PC-9 (cell line): ENCODE measurements at regions of chr2 and their contacts with region 1.

Region 1: GRCh38 chr2:26922405-26923188 is 47.8 kb upstream of the MAPRE3 start:
- DNase-seq: peak in 1 of 2 experiments; percentile 25
- H3K4me3 ChIP-seq: no peak overlapping the region
- H3K27ac ChIP-seq: no peak overlapping the region
- H3K4me1 ChIP-seq: no peaks in the 10 kb centered on the region
- H3K27me3 ChIP-seq: peaks cover 16% of the 10 kb centered on the region
- CTCF ChIP-seq: peak; percentile 64

Region 2: DNA sequence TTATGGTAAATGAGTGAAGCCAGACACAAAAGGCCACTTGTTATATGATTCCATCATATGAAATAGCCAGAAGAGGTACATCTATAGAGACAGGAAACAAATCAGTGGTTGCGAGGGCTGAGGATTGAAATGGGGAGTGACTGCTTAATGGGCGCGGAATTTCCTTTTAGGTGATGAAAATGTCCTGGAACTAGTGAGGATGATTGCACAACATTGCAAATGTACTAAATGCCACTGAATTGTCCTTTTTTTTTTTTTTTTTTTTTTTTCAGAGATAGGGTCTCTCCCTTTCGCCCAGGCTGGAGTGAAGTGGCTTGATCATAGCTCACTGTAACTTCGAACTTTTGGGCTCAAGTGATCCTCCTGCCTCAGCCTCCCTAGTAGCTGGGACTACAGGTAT is 765.0 kb before region 1 on chr2:
- CTCF ChIA-PET with region 1: no interaction called
- POLR2A ChIA-PET with region 1: no interaction called
- intact Hi-C with region 1: no loop called
- DNase-seq: no peak
- H3K4me3 ChIP-seq: no peak overlapping the region
- H3K27ac ChIP-seq: no peak overlapping the region
- H3K4me1 ChIP-seq: no peaks in the 10 kb centered on the region
- H3K27me3 ChIP-seq: no peaks in the 10 kb centered on the region
- CTCF ChIP-seq: no peak

Region 3: GRCh38 chr2:26852405-26853306 is 69.9 kb before region 1 on chr2:
- CTCF ChIA-PET with region 1: no interaction called
- POLR2A ChIA-PET with region 1: no interaction called
- intact Hi-C with region 1: loop called (anchors 5 kb)
- DNase-seq: no peak
- H3K4me3 ChIP-seq: no peak overlapping the region
- H3K27ac ChIP-seq: no peak overlapping the region
- H3K4me1 ChIP-seq: no peaks in the 10 kb centered on the region
- H3K27me3 ChIP-seq: peaks cover 27% of the 10 kb centered on the region
- CTCF ChIP-seq: no peak